ENCODE measurements at regions of chr14 and their contacts with region 1.

Region 1: DNA sequence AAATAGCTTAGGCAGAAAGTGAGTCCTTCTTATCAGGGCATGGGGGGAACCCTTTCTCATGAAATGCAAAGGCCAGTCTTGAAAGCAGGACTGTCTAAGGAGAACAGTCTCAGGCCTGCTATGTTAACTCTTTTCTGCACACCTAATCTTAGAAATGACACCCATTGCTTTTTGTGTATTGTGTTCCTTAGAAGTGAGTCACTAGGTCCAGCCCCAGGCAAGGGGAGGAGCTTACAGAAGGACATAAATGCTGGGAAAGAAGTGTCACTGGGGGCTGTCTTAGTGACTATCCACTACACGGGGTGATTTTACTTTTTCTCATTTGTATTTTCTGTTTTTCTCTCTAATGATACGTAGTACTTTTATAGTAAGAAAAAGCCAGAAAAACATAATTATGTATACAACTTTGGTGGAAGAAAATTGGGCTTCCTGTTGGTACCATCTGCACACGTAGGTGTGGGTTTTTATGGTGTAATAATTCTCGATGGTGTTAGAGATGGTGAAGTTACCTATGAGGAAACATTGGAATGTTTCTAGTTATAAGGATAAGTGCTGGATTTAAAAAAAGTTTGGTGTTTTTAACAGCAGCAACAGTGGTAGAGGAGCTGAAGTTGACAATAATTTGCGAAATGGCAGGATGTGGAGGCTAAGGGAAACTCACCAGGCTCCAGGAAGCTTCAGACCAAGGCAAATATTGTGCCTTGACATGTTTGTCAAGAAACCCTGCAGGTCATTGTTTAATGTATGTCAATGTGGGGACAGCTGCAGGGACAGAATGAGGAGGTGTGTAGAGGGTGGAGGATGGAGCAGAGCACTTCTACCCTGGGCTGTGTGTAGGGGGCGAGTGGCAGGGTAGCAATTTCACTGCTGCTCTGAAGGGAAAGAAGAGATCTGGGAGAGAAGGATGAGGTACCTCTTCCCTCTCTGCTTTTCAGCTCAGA is 214.9 kb downstream of the KTN1 start:
- H3K4me3 Mint-ChIP-seq: no peak overlapping the region
- H3K27ac Mint-ChIP-seq: no peak overlapping the region
- H3K4me1 Mint-ChIP-seq: peaks cover 28% of the 10 kb centered on the region
- H3K27me3 Mint-ChIP-seq: no peaks in the 10 kb centered on the region

Region 2: DNA sequence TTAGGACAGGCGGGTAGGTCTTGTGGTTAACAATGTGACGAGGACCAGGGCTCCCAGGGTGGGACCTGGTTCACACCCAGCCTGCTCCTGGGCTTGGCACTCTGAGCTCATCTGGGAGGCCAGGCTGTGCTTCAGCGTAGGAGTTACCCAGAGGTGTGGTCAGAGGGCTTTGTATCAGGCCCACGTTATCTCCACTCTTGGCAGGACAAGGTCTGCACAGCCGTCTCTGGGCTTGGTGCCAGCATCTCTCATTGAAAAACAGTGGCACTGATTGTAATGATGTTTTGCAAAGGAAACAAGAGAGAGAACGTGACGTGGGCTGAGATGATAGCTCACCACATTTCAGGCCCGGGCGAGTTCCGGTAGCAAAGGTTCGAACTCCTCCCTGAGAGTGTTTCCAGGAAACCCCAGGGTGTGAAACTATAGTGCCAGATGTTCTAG is 12.2 kb after region 1 on chr14:
- intact Hi-C with region 1: loop called (anchors 2 kb)
- H3K4me3 Mint-ChIP-seq: peak overlapping the region; percentile 40
- H3K27ac Mint-ChIP-seq: peak overlapping the region; percentile 74
- H3K4me1 Mint-ChIP-seq: peaks cover 48% of the 10 kb centered on the region
- H3K27me3 Mint-ChIP-seq: peaks cover 4% of the 10 kb centered on the region

Measured in dendritic cell treated with granulocyte-macrophage colony-stimulating factor and Interleukin-4, amounts not matched to agents 40 ng/mL and 50 ng/mL, for 4 days (primary cell).